Mammary epithelial cell (primary cell): ENCODE measurements at regions of chr1 and their contacts with region 1.

Region 1: DNA sequence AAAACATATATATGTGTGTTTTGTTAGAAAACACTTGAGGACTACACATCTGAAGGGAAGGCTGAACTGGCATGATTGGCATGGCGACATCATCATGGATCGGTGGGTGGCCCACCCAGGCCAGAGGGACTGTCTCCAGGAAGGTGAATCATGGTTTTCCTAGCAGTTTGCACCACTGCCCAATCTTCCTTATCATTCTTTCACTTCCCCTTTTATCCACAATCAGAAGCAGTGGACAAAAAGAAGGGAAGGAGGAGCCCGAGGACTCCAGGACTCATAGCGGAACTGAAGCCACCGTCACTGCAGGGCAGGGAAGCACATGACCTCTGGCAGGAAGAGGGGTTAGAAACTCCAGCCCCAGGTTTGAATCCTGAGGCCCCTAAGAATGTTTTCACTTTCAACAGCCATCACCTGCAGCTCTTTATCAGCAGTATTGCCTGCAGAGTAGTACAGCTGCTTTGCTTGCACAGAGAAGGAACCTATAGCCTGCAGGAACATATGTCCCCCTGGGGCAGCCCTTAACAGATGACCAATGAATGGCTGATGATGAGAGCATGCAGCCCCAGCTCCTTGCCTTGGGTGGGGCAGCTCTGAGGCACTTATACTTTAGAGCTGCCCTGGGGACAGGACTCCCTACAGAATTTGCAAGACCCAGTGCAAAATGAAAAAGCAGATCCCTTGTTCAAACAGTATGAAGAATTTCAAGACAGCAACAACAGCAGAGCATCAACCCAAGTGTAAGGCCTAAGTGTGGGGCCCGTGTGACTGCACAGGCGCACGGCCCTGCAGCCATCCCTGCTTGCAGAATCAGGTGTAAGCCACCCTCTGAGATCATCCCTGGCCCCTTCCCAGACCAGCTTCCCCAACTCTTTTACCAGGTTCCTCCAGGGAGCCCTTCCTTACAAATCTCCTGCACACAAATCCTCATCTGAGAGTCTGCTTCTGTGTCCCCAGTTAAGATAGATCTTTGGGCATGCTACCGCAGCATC is 241.8 kb upstream of the IRF2BP2 start:
- DNase-seq: no peak
- H3K4me3 ChIP-seq: no peak overlapping the region
- H3K27ac ChIP-seq: no peak overlapping the region
- H3K4me1 ChIP-seq: peaks cover 25% of the 10 kb centered on the region
- H3K27me3 ChIP-seq: no peaks in the 10 kb centered on the region
- CTCF ChIP-seq: no peak

Region 2: DNA sequence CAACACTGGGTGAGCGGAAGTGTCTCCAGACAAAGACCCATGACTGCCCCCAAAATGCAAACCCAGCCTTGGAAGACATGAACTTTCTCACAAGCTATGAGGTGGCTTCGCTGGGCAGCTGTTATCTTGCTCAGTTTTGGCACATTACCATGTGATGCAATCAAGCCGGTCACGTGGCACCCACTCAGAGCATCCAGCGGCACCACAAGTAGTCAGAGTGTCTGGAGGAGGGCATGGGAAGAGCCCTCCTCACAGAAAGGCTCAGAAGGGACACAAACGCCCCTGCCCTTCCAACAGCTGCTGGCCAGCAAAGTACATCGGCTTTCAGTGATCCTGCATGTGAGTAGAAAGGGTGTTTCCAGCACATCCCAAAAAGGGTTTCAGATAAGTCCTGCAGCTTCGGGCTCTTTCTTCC is 96.3 kb before region 1 on chr1:
- CTCF ChIA-PET with region 1: no interaction called
- dilution Hi-C with region 1: loop called (anchors 5 kb)
- in situ Hi-C with region 1: no loop called
- intact Hi-C with region 1: no loop called
- DNase-seq: no peak
- H3K4me3 ChIP-seq: no peak overlapping the region
- H3K27ac ChIP-seq: no peak overlapping the region
- H3K4me1 ChIP-seq: no peaks in the 10 kb centered on the region
- H3K27me3 ChIP-seq: no peaks in the 10 kb centered on the region
- CTCF ChIP-seq: no peak